Ascending aorta (tissue), 2 donors: ENCODE measurements at regions of chr6 and their contacts with region 1.

Region 1: GRCh38 chr6:118580585-118581419 is 32.7 kb downstream of the PLN start:
- DNase-seq: peak in 1 of 2 donors; percentile 77
- H3K4me3 ChIP-seq: peak overlapping the region in 1 of 2 donors; percentile 8
- H3K27ac ChIP-seq: no peak overlapping the region
- H3K4me1 ChIP-seq: no peaks in the 10 kb centered on the region
- H3K27me3 ChIP-seq: no peaks in the 10 kb centered on the region
- CTCF ChIP-seq: peak; percentile 60 to 81 (median 61)

Region 2: GRCh38 chr6:118509009-118509617 is 71.7 kb before region 1 on chr6:
- intact Hi-C with region 1: loop called (anchors 2 kb)
- DNase-seq: peak in 1 of 2 donors; percentile 74
- H3K4me3 ChIP-seq: no peak overlapping the region
- H3K27ac ChIP-seq: no peak overlapping the region
- H3K4me1 ChIP-seq: peaks cover 0 to 12% of the 10 kb centered on the region in 2 donors
- H3K27me3 ChIP-seq: no peaks in the 10 kb centered on the region
- CTCF ChIP-seq: peak; percentile 57 to 78 (median 66)

Region 3: GRCh38 chr6:118551063-118552053 is 29.4 kb before region 1 on chr6:
- intact Hi-C with region 1: loop called (anchors 2 kb)
- DNase-seq: no peak
- H3K4me3 ChIP-seq: peak overlapping the region; percentile 53 to 69
- H3K27ac ChIP-seq: peak overlapping the region; percentile 83 to 89
- H3K4me1 ChIP-seq: no peaks in the 10 kb centered on the region
- H3K27me3 ChIP-seq: no peaks in the 10 kb centered on the region
- CTCF ChIP-seq: peak; percentile 57 to 69 (median 64)

Region 4: GRCh38 chr6:118618679-118619377 is 38.0 kb after region 1 on chr6:
- intact Hi-C with region 1: loop called (anchors 2 kb)
- DNase-seq: peak in 1 of 2 donors; percentile 69
- H3K4me3 ChIP-seq: no peak overlapping the region
- H3K27ac ChIP-seq: no peak overlapping the region
- H3K4me1 ChIP-seq: peaks cover 3% of the 10 kb centered on the region in 2 donors
- H3K27me3 ChIP-seq: no peaks in the 10 kb centered on the region
- CTCF ChIP-seq: peak; percentile 75 to 83 (median 83)

Region 5: DNA sequence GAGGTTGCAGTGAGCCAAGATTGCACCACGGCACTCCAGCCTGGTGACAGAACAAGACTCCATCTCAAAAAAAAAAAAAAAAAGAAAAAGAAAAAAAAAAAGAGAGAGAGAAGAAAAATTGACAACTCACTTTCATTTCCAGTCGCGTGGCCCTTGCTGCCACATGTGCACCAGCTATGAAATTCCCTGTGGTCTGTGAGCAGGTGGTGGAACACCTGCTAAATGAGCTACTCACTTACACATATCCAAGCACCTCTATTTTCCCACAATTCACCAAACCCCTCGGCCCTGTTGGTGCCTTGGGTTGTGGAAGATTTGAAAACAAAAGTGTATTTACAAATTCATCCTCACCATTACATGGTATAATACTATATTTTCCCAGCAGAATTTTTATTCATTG is 207.9 kb after region 1 on chr6:
- intact Hi-C with region 1: no loop called
- DNase-seq: no peak
- H3K4me3 ChIP-seq: no peak overlapping the region
- H3K27ac ChIP-seq: no peak overlapping the region
- H3K4me1 ChIP-seq: no peaks in the 10 kb centered on the region
- H3K27me3 ChIP-seq: no peaks in the 10 kb centered on the region
- CTCF ChIP-seq: no peak